Panc1 (cell line): ENCODE measurements at regions of chr22 and their contacts with region 1.

Region 1: DNA sequence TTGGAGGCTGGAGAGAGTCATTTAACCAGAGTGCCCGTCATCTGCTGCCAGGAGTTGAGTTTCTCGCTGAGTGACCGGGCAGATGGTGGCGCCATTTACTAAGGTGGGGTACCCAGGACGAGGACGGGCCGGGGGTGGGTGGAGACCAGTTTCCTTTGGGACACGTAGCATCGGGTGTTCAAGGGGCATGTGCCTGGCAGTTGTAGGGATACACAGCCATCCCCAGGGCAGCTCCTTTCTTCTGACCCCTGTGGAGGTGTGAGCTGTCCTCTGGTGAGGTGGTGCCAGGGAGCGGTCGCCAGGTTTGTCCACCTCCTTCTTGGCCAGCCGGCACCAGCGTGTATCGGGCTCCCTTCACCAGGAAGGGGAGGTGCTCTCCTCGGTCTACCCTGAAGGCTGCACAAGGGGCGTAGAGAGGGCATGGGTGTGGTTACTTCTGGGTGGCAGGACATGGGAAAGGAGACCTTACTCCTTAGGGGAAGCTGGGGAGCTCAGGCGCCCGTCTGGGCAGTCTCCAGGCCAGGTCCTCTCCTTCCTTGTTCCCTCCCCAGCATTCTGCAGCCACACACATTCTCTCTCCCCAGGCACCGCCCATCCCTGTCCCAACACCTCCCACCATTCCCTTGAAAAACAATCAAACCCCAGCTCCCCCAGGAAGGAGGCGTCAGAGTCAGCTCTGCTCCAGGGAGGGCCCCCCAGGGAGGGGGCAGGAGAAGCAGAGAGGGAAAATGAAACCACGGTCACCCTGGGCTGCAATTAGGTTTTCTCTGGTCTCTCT is 10.3 kb upstream of the MB start:
- DNase-seq: peak; percentile 59
- ATAC-seq: peak; percentile 80
- H3K4me3 ChIP-seq: peak overlapping the region; percentile 43 to 46
- H3K27ac ChIP-seq: peak overlapping the region; percentile 97
- H3K4me1 ChIP-seq: peaks cover 44% of the 10 kb centered on the region
- H3K27me3 ChIP-seq: no peaks in the 10 kb centered on the region
- CTCF ChIP-seq: peak; percentile 82

Region 2: DNA sequence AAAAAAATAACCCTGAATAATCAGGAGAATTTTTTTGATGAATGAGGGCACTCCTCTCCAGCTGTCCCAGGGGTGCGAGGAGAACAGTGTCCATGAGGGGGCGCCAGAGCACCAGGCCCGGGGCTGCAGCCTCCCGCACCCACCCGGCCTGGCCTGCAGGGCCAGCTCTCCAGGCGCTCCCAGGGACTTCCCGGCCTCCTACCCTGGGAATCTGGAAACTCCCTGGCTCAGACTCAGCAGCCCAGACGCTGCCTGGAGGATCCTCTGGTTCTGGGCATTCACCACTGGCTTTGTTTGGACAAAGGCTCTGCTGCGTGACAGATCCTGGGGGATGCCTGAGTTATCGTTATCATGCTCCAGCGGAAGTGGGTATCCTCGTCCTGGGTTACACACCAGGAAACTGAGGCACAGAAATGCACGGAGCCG is 196.5 kb before region 1 on chr22:
- CTCF ChIA-PET with region 1: interaction called, 10 read pairs
- POLR2A ChIA-PET with region 1: no interaction called
- in situ Hi-C with region 1: no loop called
- intact Hi-C with region 1: loop called (anchors 2 kb)
- DNase-seq: peak; percentile 35
- ATAC-seq: peak; percentile 96
- H3K4me3 ChIP-seq: no peak overlapping the region
- H3K27ac ChIP-seq: peak overlapping the region; percentile 89
- H3K4me1 ChIP-seq: peaks cover 18% of the 10 kb centered on the region
- H3K27me3 ChIP-seq: no peaks in the 10 kb centered on the region
- CTCF ChIP-seq: peak; percentile 89

Region 3: DNA sequence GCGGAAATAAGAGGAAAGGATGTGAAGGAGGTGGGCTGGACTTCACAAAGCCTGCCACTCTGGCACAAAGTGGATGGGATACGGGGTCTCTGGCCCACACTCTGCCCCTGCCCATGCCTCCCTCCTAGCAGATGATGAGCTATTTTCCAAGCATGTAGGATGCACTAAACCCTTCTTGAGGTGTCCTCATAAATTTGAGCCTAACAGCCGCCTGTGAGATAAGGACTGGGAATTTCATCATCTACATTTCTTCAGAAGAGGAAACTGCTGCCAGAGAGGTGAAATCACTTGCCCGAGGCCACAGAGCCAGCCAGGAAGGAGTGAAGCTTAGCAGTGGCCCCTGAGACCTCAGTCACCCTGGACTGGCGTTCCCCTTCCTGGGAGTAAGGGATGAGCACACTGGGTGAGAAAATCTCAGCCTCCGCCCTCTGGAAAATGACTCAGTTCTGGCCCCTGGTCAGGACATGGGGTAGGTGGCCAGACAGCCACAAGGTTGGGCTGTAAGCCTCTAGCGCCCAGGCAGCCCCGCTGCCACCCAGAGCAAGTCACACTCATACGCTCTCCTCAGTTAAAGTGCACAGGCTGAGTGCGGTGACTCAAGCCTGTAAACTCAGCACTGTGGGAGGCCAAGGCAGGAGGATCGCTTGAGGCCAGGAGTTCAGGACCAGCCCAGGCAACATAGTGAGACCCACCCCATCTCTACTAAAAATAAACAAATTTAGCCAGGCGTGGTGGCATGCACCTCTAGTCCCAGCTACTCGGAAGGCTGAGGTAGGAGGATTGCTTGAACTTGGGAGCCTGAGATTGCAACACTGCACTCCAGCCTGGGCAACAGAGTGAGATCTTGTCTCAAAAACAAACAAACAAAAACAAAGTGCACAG is 38.1 kb before region 1 on chr22:
- CTCF ChIA-PET with region 1: no interaction called
- POLR2A ChIA-PET with region 1: no interaction called
- in situ Hi-C with region 1: no loop called
- intact Hi-C with region 1: loop called (anchors 5 kb)
- DNase-seq: peak; percentile 89
- ATAC-seq: peak; percentile 88
- H3K4me3 ChIP-seq: no peak overlapping the region
- H3K27ac ChIP-seq: peak overlapping the region; percentile 99
- H3K4me1 ChIP-seq: peaks cover 77% of the 10 kb centered on the region
- H3K27me3 ChIP-seq: no peaks in the 10 kb centered on the region
- CTCF ChIP-seq: no peak

Region 4: GRCh38 chr22:35838855-35839576 is 211.6 kb after region 1 on chr22:
- CTCF ChIA-PET with region 1: interaction called, 3 read pairs
- POLR2A ChIA-PET with region 1: no interaction called
- in situ Hi-C with region 1: no loop called
- intact Hi-C with region 1: loop called (anchors 5 kb)
- DNase-seq: no peak
- ATAC-seq: no peak
- H3K4me3 ChIP-seq: peak overlapping the region; percentile 71 to 74
- H3K27ac ChIP-seq: peak overlapping the region; percentile 93
- H3K4me1 ChIP-seq: peaks cover 28% of the 10 kb centered on the region
- H3K27me3 ChIP-seq: no peaks in the 10 kb centered on the region
- CTCF ChIP-seq: peak; percentile 51

Region 5: DNA sequence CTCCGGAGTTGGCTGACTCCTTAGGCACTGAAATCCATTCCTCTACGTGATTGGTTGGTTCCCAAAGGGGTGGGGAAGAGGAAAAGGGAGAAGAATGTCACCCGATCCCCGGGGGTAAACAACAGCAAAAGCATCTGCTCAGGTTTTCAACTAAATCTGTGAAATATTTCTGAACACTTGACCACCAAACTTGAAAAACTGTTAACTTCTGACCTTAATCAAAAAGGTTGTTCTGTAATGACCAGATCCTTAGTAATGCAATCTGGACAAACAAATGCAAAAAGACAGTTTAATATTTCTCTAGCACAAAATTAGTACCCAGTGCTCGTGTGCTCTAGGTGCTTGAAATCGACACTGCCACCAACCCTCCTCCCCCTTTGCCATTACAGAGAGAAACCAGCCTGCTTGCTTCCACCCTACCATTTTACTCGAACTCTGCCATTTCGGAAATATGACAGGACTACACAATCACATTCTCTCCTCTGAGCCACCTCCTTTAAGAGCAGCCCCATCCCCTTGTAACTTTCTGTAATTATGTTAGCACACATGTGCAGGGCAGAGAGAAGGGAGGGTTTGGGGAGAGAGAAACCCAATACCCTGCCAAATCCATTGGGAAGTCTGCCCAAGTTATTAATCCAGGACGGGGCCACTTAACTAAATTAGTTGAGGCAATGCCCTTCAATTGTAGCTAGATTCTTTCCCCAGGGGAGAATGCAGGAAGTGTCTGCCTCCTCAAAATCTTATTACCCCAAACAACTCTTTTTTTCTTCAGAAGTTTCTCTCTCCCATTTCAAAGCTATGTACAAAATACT is 287.4 kb after region 1 on chr22:
- CTCF ChIA-PET with region 1: no interaction called
- POLR2A ChIA-PET with region 1: no interaction called
- in situ Hi-C with region 1: no loop called
- intact Hi-C with region 1: loop called (anchors 10 kb)
- DNase-seq: peak; percentile 30
- ATAC-seq: peak; percentile 91
- H3K4me3 ChIP-seq: peak overlapping the region; percentile 31 to 56
- H3K27ac ChIP-seq: peak overlapping the region; percentile 74
- H3K4me1 ChIP-seq: peaks cover 17% of the 10 kb centered on the region
- H3K27me3 ChIP-seq: no peaks in the 10 kb centered on the region
- CTCF ChIP-seq: no peak